Natural killer cell (primary cell): ENCODE measurements at regions of chr7 and their contacts with region 1.

Region 1: GRCh38 chr7:36863901-36864701 is 139.8 kb upstream of the AOAH start:
- DNase-seq: peak; percentile 67 to 75
- ATAC-seq: peak; percentile 77 to 93 (median 89)
- H3K4me3 ChIP-seq: no peak overlapping the region
- H3K4me3 Mint-ChIP-seq: peak overlapping the region; percentile 68
- H3K27ac ChIP-seq: peak overlapping the region; percentile 80
- H3K27ac Mint-ChIP-seq: peak overlapping the region; percentile 92 to 97
- H3K4me1 ChIP-seq: peaks cover 43% of the 10 kb centered on the region
- H3K4me1 Mint-ChIP-seq: peaks cover 81 to 95% of the 10 kb centered on the region in 2 donors
- H3K27me3 ChIP-seq: no peaks in the 10 kb centered on the region
- H3K27me3 Mint-ChIP-seq: no peaks in the 10 kb centered on the region
- CTCF ChIP-seq: no peak

Region 2: DNA sequence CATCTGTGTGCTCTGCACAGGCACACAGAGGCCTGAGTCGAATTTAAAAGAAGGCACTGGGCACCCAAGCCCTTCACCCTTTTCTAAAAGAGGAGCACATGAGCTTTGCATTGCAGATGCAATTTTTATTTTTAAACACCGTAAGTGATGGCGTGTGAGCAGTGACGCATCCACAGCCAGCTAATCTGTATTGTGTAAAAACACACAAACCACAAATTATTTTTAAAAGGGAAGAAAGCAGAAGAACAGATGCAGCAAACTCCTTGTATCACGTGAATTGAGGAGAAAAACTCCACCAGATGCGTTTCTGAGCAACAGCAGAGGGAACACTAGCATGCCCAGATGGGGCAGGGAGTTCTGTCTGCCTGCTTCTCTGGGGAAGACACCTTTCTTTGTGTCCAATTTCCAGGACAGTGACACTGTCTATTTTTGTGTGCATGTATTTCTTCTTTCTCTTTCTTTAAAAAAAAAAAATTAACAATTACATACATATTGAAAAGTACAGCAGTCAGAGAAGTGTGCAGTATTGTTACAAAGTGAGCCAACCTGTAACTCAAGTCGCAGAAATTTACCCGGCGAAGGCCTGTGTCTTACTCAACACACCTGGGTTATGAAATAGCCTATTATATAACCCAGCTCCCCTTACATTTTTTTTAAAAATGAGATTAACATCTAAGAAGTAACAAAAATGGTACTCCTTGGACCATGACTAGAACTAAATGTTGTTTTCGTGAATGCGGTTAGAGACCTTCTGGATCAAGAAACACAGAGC is 671.9 kb before region 1 on chr7:
- intact Hi-C with region 1: no loop called
- DNase-seq: no peak
- ATAC-seq: peak in 1 of 3 donors; percentile 65
- H3K4me3 ChIP-seq: no peak overlapping the region
- H3K4me3 Mint-ChIP-seq: no peak overlapping the region
- H3K27ac ChIP-seq: no peak overlapping the region
- H3K27ac Mint-ChIP-seq: no peak overlapping the region
- H3K4me1 ChIP-seq: peaks cover 9% of the 10 kb centered on the region
- H3K4me1 Mint-ChIP-seq: no peaks in the 10 kb centered on the region
- H3K27me3 ChIP-seq: no peaks in the 10 kb centered on the region
- H3K27me3 Mint-ChIP-seq: peaks cover 0 to 7% of the 10 kb centered on the region in 2 donors
- CTCF ChIP-seq: no peak

Region 3: DNA sequence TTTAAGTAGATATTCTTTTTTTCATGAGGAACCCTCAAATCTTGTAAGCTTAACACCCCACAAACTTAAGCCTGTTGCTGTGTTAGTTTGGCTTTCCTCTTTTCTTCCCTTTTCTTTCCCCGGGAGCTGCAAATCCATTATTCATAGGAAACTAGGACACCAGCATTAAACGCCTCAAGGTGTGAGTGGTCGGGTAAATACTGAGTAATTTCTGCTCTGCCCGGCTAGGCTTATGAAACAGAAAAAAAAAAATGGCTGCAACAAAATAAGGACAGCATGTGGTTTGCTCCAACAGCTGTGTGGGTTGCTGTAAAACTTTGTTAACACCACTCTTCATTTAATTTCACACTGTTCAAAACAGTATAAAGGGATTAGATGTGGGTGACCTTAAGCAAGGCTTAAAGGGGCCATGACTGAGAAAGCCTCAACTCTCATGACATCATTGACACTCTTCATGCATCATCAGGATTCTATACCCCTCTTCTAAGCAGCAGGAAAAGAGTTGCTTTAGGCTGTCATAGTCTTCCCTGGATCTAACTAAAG is 243.9 kb before region 1 on chr7:
- intact Hi-C with region 1: loop called (anchors 1 kb)
- DNase-seq: no peak
- ATAC-seq: peak; percentile 92 to 94 (median 93)
- H3K4me3 ChIP-seq: no peak overlapping the region
- H3K4me3 Mint-ChIP-seq: peak overlapping the region; percentile 28
- H3K27ac ChIP-seq: peak overlapping the region; percentile 69
- H3K27ac Mint-ChIP-seq: peak overlapping the region; percentile 79 to 89
- H3K4me1 ChIP-seq: peaks cover 11% of the 10 kb centered on the region
- H3K4me1 Mint-ChIP-seq: peaks cover 49 to 63% of the 10 kb centered on the region in 2 donors
- H3K27me3 ChIP-seq: no peaks in the 10 kb centered on the region
- H3K27me3 Mint-ChIP-seq: no peaks in the 10 kb centered on the region
- CTCF ChIP-seq: no peak

Region 4: GRCh38 chr7:36723951-36724664 is 140.0 kb before region 1 on chr7 and contains the start of gene AOAH:
- intact Hi-C with region 1: loop called (anchors 1 kb)
- DNase-seq: peak; percentile 72 to 93
- ATAC-seq: peak; percentile 74 to 92 (median 89)
- H3K4me3 ChIP-seq: peak within 1 kb of the TSS; percentile 78
- H3K4me3 Mint-ChIP-seq: peak within 1 kb of the TSS; percentile 91
- H3K27ac ChIP-seq: peak within 1 kb of the TSS; percentile 75
- H3K27ac Mint-ChIP-seq: peak within 1 kb of the TSS; percentile 90
- H3K4me1 ChIP-seq: peaks cover 57% of the 10 kb centered on the region
- H3K4me1 Mint-ChIP-seq: peaks cover 84 to 88% of the 10 kb centered on the region in 2 donors
- H3K27me3 ChIP-seq: no peaks in the 10 kb centered on the region
- H3K27me3 Mint-ChIP-seq: no peaks in the 10 kb centered on the region
- CTCF ChIP-seq: no peak
- total RNA-seq, gene AOAH: 263 to 403 (median 312) TPM

Region 5: DNA sequence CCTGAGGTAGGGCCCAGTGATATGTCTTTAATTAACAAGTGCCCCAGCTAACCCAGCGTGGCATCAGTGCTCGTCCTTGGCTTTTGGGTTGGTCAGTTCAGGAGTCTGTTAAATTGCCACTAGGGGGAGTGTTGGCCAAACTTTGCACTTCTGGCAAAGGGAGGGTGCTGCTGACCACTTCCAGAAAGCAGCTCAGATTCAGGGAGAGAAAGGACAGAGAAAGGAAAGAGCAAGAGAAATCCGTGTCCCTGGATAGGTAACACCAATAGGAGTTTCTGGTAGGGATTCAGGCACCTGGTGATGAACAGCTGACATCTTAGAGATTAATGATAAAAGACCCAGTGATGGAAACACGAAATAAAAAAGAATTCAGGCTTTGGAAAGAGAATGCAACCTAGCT is 103.3 kb after region 1 on chr7:
- intact Hi-C with region 1: loop called (anchors 2 kb)
- DNase-seq: no peak
- ATAC-seq: peak in 1 of 3 donors; percentile 46
- H3K4me3 ChIP-seq: no peak overlapping the region
- H3K4me3 Mint-ChIP-seq: peak overlapping the region; percentile 40
- H3K27ac ChIP-seq: no peak overlapping the region
- H3K27ac Mint-ChIP-seq: peak overlapping the region; percentile 68 to 83
- H3K4me1 ChIP-seq: peaks cover 20% of the 10 kb centered on the region
- H3K4me1 Mint-ChIP-seq: peaks cover 52 to 54% of the 10 kb centered on the region in 2 donors
- H3K27me3 ChIP-seq: no peaks in the 10 kb centered on the region
- H3K27me3 Mint-ChIP-seq: no peaks in the 10 kb centered on the region
- CTCF ChIP-seq: no peak

Region 6: GRCh38 chr7:38306171-38306570 is 1442.1 kb after region 1 on chr7:
- intact Hi-C with region 1: loop called (anchors 10 kb)
- DNase-seq: no peak
- ATAC-seq: no peak
- H3K4me3 ChIP-seq: no peak overlapping the region
- H3K4me3 Mint-ChIP-seq: peak overlapping the region; percentile 99
- H3K27ac ChIP-seq: peak overlapping the region; percentile 97
- H3K27ac Mint-ChIP-seq: peak overlapping the region; percentile 95 to 99
- H3K4me1 ChIP-seq: peaks cover 67% of the 10 kb centered on the region
- H3K4me1 Mint-ChIP-seq: peaks cover 89% of the 10 kb centered on the region in 2 donors
- H3K27me3 ChIP-seq: no peaks in the 10 kb centered on the region
- H3K27me3 Mint-ChIP-seq: no peaks in the 10 kb centered on the region
- CTCF ChIP-seq: no peak